CD4-positive, alpha-beta memory T cell (primary cell): ENCODE measurements at regions of chr6 and their contacts with region 1.

Region 1: DNA sequence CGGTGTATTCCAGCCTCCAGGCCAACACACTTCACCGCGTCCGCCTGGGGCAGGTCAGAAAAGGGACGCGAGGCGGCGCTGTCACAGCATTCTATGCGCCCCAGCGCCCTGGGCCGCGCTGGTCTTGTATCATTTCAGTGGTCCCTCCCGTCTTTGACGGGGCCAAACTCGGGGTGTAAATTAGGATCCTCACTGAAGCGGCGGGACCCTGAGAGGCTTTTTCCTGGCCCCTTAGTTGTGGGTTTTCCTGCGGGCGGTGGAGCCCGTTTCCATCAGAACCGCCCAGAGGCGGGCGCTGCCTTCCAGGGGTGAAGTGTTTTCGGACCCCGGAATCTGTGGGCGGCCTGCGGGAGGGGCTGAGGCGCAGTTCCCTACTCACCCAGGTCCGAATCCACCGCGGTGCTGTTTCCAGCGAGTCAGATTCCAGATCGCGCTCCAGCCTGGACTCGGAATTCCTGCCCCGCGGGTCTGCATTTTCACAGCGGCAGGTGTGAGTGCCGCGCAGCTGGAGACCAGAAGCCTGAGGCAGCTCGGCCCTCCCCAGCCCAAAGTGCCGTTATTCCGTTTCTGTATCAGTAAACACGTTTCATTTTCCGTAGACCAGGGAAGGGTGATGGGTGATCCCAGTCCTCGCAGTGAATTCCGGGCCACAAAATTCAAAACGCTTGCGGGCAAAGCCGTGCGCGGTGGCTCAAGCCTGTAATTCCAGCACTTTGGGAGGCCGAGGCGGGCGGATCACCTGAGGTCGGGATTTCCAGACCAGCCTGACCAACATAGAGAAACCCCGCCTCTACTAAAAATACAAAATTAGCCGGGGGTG is 3.9 kb upstream of the MICB start:
- DNase-seq: peak; percentile 56 to 76 (median 73)
- H3K4me3 ChIP-seq: peak overlapping the region; percentile 71 to 91
- H3K4me3 Mint-ChIP-seq: peak overlapping the region; percentile 85 to 98 (median 91)
- H3K27ac ChIP-seq: peak overlapping the region; percentile 77
- H3K27ac Mint-ChIP-seq: peak overlapping the region; percentile 87 to 96 (median 95)
- H3K4me1 ChIP-seq: peaks cover 63% of the 10 kb centered on the region
- H3K4me1 Mint-ChIP-seq: peaks cover 35 to 69% (median 50%) of the 10 kb centered on the region in 4 donors
- H3K27me3 ChIP-seq: no peaks in the 10 kb centered on the region
- H3K27me3 Mint-ChIP-seq: no peaks in the 10 kb centered on the region

Region 2: GRCh38 chr6:31358302-31358701 is 135.8 kb before region 1 on chr6:
- CTCF ChIA-PET with region 1: no interaction called
- POLR2A ChIA-PET with region 1: no interaction called
- intact Hi-C with region 1: no loop called
- DNase-seq: no peak
- H3K4me3 ChIP-seq: peak overlapping the region; percentile 36 to 68
- H3K4me3 Mint-ChIP-seq: peak overlapping the region; percentile 97 to 99 (median 99)
- H3K27ac ChIP-seq: peak overlapping the region; percentile 99
- H3K27ac Mint-ChIP-seq: peak overlapping the region; percentile 100
- H3K4me1 ChIP-seq: peaks cover 46% of the 10 kb centered on the region
- H3K4me1 Mint-ChIP-seq: peaks cover 31 to 69% (median 42%) of the 10 kb centered on the region in 4 donors
- H3K27me3 ChIP-seq: no peaks in the 10 kb centered on the region
- H3K27me3 Mint-ChIP-seq: peaks cover 1% of the 10 kb centered on the region in 2 donors

Region 3: DNA sequence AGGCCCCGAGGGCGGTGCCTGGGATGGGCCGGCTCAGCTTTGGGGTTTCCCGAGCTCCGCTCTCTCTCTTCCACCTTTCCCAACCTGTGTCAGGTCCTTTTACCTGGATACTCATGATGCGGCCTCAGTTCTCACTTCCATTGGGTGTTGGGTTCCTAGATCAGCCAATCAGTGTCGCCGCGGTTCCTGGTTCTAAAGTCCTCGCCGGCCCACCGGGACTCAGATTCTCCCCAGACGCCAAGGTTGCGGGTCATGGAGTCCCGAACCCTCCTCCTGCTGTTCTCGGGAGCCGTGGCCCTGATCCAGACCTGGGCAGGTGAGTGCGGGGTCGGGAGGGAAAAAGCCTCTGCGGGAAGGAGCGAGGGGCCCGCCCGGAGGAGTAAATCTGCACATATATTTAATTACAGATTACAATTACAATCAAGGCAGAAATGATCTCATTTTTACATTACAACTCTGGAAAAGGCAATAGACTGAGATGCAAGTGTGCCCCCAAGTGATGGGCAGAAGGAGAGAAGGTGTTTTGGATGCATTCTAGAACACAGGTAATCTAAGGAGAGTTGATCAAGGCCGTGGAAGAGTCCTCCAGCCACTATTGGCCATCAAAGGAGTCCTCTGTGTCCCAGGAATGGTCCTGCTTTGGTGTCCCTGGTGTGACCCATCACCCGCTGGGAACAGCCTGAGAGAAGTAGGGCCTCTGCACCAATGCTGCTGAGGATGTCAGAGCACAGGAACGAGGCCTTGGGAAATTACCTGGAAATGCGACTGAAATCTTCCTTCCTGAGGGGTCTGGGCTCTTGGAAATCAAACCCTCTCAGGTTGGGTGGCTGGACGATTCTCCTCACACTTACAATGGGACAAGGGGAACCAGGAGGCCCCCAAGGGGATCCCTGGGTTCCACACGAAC is 30.9 kb before region 1 on chr6:
- CTCF ChIA-PET with region 1: no interaction called
- POLR2A ChIA-PET with region 1: interaction called, 6 read pairs
- intact Hi-C with region 1: loop called (anchors 1 kb)
- DNase-seq: peak; percentile 91 to 96 (median 94)
- H3K4me3 ChIP-seq: peak overlapping the region; percentile 82 to 85
- H3K4me3 Mint-ChIP-seq: peak overlapping the region; percentile 97 to 100 (median 100)
- H3K27ac ChIP-seq: peak overlapping the region; percentile 99
- H3K27ac Mint-ChIP-seq: peak overlapping the region; percentile 99 to 100 (median 100)
- H3K4me1 ChIP-seq: peaks cover 55% of the 10 kb centered on the region
- H3K4me1 Mint-ChIP-seq: peaks cover 47 to 73% (median 60%) of the 10 kb centered on the region in 4 donors
- H3K27me3 ChIP-seq: no peaks in the 10 kb centered on the region
- H3K27me3 Mint-ChIP-seq: no peaks in the 10 kb centered on the region

Region 4: GRCh38 chr6:31575335-31575901 is 81.3 kb after region 1 on chr6 and contains the start of gene TNF:
- CTCF ChIA-PET with region 1: interaction called, 17 read pairs
- POLR2A ChIA-PET with region 1: interaction called, 43 read pairs
- intact Hi-C with region 1: loop called (anchors 5 kb)
- DNase-seq: peak; percentile 71 to 92 (median 74)
- H3K4me3 ChIP-seq: peak within 1 kb of the TSS; percentile 87 to 99
- H3K4me3 Mint-ChIP-seq: peak within 1 kb of the TSS; percentile 88 to 100 (median 98)
- H3K27ac ChIP-seq: peak within 1 kb of the TSS; percentile 83
- H3K27ac Mint-ChIP-seq: peak within 1 kb of the TSS; percentile 96 to 100 (median 99)
- H3K4me1 ChIP-seq: peaks cover 82% of the 10 kb centered on the region
- H3K4me1 Mint-ChIP-seq: peaks cover 58 to 97% (median 73%) of the 10 kb centered on the region in 4 donors
- H3K27me3 ChIP-seq: no peaks in the 10 kb centered on the region
- H3K27me3 Mint-ChIP-seq: no peaks in the 10 kb centered on the region
- total RNA-seq, gene TNF: 25.0 to 28.2 TPM

Region 5: DNA sequence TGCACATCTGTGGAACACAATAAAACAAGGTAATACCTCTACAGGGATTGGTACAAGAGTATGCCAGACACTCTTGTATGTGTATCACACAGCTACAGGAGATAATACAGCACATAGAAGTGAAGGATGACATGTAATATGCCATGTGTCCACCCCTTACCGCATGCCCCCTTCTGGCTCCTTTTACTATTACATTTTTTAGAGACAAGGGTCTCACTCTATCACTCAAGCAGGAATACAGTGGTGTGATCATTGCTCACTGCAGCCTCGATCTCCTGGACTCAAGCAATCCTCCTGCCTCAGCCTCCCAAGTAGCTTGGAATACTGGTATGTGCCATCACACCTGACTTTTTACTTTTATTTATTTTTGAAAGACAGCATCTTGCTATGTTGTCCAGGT is 102.9 kb after region 1 on chr6:
- CTCF ChIA-PET with region 1: interaction called, 82 read pairs
- POLR2A ChIA-PET with region 1: interaction called, 10 read pairs
- intact Hi-C with region 1: loop called (anchors 1 kb)
- DNase-seq: peak; percentile 66 to 79 (median 75)
- H3K4me3 ChIP-seq: no peak overlapping the region
- H3K4me3 Mint-ChIP-seq: peak overlapping the region in 5 of 8 donors; percentile 33 to 66 (median 43)
- H3K27ac ChIP-seq: no peak overlapping the region
- H3K27ac Mint-ChIP-seq: peak overlapping the region; percentile 60 to 89 (median 77)
- H3K4me1 ChIP-seq: peaks cover 60% of the 10 kb centered on the region
- H3K4me1 Mint-ChIP-seq: peaks cover 27 to 56% (median 45%) of the 10 kb centered on the region in 4 donors
- H3K27me3 ChIP-seq: no peaks in the 10 kb centered on the region
- H3K27me3 Mint-ChIP-seq: no peaks in the 10 kb centered on the region

Region 6: GRCh38 chr6:31834434-31835198 is 340.5 kb after region 1 on chr6:
- CTCF ChIA-PET with region 1: interaction called, 5 read pairs
- POLR2A ChIA-PET with region 1: no interaction called
- intact Hi-C with region 1: loop called (anchors 5 kb)
- DNase-seq: peak; percentile 80 to 84 (median 81)
- H3K4me3 ChIP-seq: peak overlapping the region; percentile 75 to 88
- H3K4me3 Mint-ChIP-seq: peak overlapping the region; percentile 88 to 99 (median 96)
- H3K27ac ChIP-seq: peak overlapping the region; percentile 88
- H3K27ac Mint-ChIP-seq: peak overlapping the region; percentile 97 to 99 (median 99)
- H3K4me1 ChIP-seq: peaks cover 61% of the 10 kb centered on the region
- H3K4me1 Mint-ChIP-seq: peaks cover 27 to 65% (median 48%) of the 10 kb centered on the region in 4 donors
- H3K27me3 ChIP-seq: no peaks in the 10 kb centered on the region
- H3K27me3 Mint-ChIP-seq: no peaks in the 10 kb centered on the region